AG04449 (cell line): ENCODE measurements at regions of chr1 and their contacts with region 1.

Region 1: DNA sequence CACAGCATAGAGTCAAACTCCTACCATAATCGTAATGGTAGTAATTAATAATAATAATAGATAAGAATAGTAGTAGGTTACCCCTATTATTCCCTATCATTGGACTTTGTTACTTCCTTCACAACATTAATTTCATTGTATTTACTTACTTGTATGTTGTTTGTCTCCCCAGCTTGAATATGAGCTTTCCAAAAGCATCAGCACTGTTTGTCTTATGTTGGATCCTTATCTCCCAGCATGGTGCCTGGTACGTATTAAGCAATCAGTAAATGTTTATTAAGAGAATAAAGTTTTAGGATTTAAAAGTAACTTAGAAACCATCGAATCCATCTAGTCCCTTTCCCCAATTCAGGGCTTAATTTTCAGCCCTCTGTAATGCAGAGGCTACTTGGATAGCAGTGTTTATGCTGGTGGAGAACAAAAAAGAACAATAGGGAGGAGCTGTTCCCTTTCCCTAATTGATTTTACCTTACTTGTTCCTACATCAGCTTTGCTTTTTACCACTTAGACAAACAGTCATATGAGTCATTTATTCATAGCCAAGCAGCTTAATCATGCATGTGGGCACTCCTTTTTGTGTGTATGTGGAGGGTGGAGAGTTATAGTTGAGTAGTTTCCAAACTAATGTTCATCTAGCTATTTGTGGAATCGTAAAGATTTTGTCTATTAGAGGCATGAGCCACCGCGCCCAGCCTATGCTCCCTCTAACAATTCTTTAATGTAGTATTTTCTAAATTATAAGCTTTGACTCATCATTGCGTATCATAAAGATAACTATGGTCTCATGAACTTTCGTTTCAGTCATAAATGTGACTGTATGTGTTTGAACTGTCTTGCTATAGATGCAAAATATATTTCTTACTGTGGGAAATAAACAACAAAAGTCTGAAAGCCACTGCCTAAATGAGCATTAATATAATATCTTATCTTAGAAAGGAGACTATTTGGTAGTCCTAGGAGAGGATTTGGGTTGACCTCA is 20.9 kb upstream of the DR1 start:
- DNase-seq: peak; percentile 74
- H3K4me3 ChIP-seq: no peak overlapping the region
- CTCF ChIP-seq: no peak

Region 2: DNA sequence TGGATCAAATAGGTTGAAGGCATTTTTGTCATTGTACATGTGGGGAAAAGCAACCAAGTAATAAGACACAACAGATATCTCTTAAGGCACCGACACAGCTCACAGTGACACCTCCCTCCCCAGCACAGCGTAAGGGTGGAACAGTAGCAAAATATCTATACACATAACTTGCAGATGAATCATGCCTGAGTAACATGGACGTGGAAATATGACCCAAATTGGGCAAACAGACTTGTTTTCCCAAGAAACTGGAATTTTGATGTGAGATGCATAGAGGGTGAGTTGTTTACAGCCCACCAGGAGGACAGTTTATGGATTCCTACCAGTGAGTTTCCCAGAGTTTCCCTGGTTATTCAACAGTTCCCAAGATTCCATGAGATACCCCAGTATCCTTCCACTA is 13.6 kb after region 1 on chr1:
- CTCF ChIA-PET with region 1: no interaction called
- POLR2A ChIA-PET with region 1: interaction called, 10 read pairs
- DNase-seq: peak; percentile 81
- H3K4me3 ChIP-seq: no peak overlapping the region
- CTCF ChIP-seq: no peak

Region 3: DNA sequence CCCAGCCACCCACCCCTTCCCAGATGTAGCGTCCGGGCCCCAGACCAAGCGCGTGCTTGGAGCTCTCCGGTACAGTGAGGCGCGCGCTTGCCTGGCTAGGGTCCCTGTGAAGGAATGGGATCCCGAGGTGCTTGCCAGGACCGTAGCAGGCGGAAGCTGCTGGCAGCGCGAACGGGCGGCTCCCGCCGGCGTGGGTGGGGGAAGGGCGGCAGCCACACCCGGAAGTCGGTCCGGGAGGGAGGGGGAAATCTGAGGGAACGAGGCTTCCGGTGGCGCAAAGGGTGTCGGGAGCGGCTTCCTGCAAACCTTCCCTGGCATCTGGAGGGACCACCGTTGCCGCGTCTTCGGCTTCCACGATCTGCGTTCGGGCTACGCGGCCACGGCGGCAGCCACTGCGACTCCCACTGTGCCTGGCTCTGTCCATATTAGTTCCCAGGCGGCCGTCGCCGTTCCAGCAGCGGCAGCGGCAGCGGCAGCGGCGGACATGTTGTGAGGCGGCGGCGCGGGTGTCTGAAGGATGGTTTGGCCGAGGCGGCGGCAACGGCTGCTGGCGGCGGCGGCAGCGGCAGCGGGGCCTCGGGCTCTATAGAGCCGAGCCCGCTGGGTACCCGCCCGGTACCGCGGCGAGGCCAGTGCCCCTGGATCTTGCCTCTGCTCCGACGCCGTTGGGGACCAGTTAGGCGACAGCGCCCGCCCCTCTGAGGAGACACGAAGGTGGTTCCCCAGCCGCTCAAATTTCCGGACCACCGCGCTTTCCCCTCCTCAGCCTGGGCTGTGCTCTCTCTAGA is 21.1 kb after region 1 on chr1 and contains the start of gene DR1:
- CTCF ChIA-PET with region 1: no interaction called
- POLR2A ChIA-PET with region 1: interaction called, 10 read pairs
- DNase-seq: peak; percentile 77
- H3K4me3 ChIP-seq: peak within 1 kb of the TSS; percentile 85
- CTCF ChIP-seq: no peak

Region 4: DNA sequence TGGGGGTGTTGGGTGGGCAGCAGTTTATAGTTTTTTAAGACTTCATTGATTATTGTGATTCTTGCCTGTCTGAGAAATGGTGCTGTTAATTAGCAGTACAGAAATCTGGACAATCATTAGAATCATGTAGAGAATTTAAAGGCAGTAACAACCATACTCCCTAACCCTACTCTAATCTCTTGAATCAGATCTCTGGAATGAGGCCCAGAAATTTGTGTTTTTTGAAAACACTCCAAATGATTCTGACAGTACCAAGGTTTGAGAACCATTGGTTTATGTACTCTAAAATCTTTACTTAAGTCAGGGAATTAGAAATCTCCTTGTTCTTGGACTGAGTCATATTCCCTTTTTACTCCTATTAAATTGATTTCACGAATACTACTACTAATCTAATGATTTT is 147.1 kb after region 1 on chr1:
- CTCF ChIA-PET with region 1: no interaction called
- POLR2A ChIA-PET with region 1: no interaction called
- DNase-seq: peak; percentile 70
- H3K4me3 ChIP-seq: no peak overlapping the region
- CTCF ChIP-seq: no peak